HEK293 (cell line): ENCODE measurements at regions of chr2 and their contacts with region 1.

Region 1: GRCh38 chr2:127479219-127479825 is 47.0 kb downstream of the IWS1 start:
- H3K4me3 ChIP-seq: no peak overlapping the region
- H3K27ac ChIP-seq: no peak overlapping the region
- H3K4me1 ChIP-seq: no peaks in the 10 kb centered on the region
- CTCF ChIP-seq: peak; percentile 53; the same call in 1 of the 2 replicates

Region 2: DNA sequence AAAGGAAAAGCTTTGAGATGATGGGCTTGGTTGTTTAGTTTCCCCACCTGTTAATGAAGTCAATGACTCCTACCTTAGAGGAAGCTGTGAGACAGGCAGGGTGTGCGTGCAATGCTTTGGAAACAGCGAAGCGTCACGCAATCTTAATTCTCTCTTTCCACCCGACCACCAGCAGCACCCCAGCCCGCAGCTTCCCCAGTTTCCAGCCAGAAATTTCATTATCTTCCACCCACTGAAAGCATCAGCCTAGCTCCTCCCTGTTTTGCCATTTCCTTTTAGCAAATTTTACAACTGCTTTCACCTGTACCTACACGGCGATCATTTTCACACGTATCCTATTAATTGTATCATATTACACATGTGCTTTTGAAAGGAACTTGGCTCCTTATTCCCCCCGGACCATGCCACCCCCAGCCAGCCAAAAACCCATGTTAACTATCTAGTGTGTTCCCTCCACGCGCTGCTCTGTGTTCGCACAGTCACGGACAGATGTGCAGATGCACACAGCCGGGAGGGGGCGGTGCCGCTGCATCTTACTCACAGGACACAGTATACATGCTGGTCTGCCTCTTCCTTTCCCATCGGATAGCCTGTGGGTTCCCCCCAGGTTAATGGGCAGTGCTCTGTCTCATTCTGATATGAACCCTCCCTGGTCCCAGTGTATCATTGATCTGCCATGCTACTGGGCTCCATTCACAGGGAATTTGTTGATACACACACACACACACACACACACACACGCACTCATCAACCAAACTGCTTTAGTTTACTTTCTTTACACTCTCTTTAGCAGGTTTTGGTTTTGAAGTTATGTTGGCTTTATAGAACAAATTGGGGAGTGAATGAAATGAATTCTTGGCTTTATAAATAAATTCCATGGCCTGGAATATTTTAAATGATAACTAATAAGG is 281.6 kb before region 1 on chr2:
- CTCF ChIA-PET with region 1: interaction called, 28 read pairs
- POLR2A ChIA-PET with region 1: no interaction called
- H3K4me3 ChIP-seq: no peak overlapping the region
- H3K27ac ChIP-seq: no peak overlapping the region
- H3K4me1 ChIP-seq: no peaks in the 10 kb centered on the region
- CTCF ChIP-seq: peak; percentile 92

Region 3: GRCh38 chr2:127308586-127309138 is 170.7 kb before region 1 on chr2:
- CTCF ChIA-PET with region 1: interaction called, 10 read pairs
- POLR2A ChIA-PET with region 1: no interaction called
- H3K4me3 ChIP-seq: no peak overlapping the region
- H3K27ac ChIP-seq: no peak overlapping the region
- H3K4me1 ChIP-seq: peaks cover 2% of the 10 kb centered on the region; the same call in 1 of the 2 replicates
- CTCF ChIP-seq: no peak

Region 4: DNA sequence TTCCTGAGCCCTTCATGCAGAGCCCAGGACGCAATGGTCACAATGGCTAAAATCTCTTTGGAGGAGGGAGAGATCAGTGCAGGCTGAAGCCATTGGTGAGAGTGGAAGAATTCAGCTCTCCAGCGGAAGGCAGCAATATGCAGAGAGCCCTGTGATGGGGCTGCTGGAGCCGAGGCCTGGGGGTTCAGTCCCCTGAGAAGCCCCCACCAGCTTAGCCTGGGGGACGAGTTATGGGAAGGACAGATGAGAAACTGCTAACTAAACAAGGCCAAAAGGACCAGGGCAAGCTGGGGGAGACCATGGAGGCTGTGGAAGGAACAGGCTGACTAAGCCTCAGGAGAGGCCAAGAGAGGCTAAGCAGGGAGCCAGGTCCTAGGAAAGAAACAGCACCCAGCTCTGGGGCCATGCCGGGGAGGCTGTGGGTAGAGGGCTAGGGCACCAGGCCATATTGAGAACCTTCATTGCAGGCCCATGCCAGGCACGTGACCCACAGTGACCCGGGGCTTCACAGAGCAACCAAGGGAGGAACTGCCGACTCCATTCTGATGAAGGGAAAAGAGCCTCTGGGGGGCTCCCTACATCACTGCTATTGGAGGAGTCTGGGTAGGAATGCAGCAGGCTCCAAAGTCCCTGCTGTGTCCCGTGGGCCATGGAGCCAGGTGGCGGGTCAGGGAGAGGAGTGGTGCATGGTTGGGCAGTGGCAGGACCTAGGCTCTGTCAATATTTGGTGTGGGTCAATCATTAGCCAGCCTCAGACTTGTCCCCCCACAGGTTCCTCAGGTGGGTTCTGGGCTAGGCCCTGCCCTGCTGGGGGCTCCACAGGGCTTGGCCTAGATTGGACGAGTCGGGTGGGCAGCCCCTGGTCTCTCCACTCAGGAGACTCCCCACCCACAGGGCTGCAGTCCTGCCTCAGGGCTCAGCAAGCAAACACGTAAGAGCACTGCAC is 41.3 kb before region 1 on chr2:
- CTCF ChIA-PET with region 1: interaction called, 11 read pairs
- POLR2A ChIA-PET with region 1: no interaction called
- H3K4me3 ChIP-seq: no peak overlapping the region
- H3K27ac ChIP-seq: no peak overlapping the region
- H3K4me1 ChIP-seq: no peaks in the 10 kb centered on the region
- CTCF ChIP-seq: no peak

Region 5: DNA sequence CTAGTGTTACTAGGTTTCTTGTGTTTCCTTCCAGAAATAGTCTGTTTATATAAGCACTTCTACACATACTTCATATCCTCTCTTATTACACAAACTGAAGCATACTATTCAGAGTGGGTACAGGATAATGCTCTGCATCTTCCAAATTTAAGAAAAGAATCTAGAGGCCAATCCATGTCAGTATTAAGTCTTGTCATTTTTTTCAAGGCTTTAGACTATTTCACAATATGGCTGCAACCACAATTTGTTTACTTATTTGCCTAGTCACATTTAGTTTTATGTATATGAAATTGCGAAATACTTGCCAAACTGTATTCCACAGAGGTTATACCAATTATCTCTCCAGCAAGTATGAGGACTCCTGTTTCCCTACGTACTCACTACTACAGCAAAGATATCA is 19.1 kb after region 1 on chr2:
- CTCF ChIA-PET with region 1: interaction called, 16 read pairs
- POLR2A ChIA-PET with region 1: no interaction called
- H3K4me3 ChIP-seq: no peak overlapping the region
- H3K27ac ChIP-seq: no peak overlapping the region
- H3K4me1 ChIP-seq: no peaks in the 10 kb centered on the region
- CTCF ChIP-seq: no peak

Region 6: DNA sequence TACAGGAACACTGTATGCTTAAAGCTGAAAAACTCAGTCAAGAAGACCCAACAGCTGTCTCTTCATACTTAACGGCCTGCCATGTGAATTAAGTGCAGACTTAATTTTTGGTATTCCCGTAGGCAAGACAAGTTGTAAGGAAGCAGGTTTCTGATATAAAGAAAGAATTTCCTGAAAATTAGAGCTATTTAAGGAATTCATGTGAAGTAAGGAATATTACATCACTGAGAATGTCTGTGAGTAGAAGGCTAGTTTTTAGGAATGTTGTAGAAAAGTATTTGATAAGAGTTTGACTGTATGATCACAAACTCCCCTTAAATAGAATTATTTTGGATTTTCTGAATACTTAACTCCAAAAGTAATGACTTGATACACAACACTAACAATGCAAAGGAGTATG is 280.6 kb after region 1 on chr2:
- CTCF ChIA-PET with region 1: no interaction called
- POLR2A ChIA-PET with region 1: no interaction called
- H3K4me3 ChIP-seq: no peak overlapping the region
- H3K27ac ChIP-seq: no peak overlapping the region
- H3K4me1 ChIP-seq: no peaks in the 10 kb centered on the region
- CTCF ChIP-seq: no peak